ENCODE measurements at regions of chr6 and their contacts with region 1.

Region 1: DNA sequence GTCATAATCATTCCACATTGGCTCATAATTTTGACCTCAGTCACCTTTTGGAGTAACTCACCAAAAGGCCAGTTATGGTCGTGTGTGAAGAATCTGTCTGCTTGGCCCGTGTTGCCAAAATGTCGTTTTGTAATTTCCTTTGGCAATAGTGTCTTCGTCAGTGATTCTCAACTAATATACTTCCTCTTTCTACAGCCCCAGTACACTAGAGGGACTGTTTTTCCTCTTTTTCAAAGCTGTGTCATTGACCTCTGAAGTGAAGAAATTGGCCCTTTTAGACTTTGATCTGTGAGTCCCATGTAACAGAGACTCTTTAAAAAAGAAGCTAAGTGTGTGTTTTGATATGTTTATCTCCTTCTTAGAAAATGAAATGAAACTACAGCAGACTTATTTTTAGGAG is 5.2 kb downstream of the FOXO3 start:
- DNase-seq: peak; percentile 58 to 67
- ATAC-seq: peak; percentile 21
- H3K4me3 ChIP-seq: peak overlapping the region; percentile 1 to 99 (median 91)
- H3K27ac ChIP-seq: peak overlapping the region; percentile 95 to 100 (median 100)
- H3K4me1 ChIP-seq: peaks cover 68 to 69% of the 10 kb centered on the region in 2 donors
- H3K27me3 ChIP-seq: no peaks in the 10 kb centered on the region
- CTCF ChIP-seq: no peak
- POLR2A ChIP-seq: no peak

Region 2: GRCh38 chr6:108157234-108157980 is 408.5 kb before region 1 on chr6:
- in situ Hi-C with region 1: no loop called
- intact Hi-C with region 1: no loop called
- DNase-seq: no peak
- ATAC-seq: no peak
- H3K4me3 ChIP-seq: peak overlapping the region; percentile 22 to 37 (median 26)
- H3K27ac ChIP-seq: no peak overlapping the region
- H3K4me1 ChIP-seq: peaks cover 8 to 9% of the 10 kb centered on the region in 2 donors
- H3K27me3 ChIP-seq: peaks cover 88 to 97% (median 90%) of the 10 kb centered on the region in 3 donors
- CTCF ChIP-seq: no peak
- POLR2A ChIP-seq: no peak

Region 3: DNA sequence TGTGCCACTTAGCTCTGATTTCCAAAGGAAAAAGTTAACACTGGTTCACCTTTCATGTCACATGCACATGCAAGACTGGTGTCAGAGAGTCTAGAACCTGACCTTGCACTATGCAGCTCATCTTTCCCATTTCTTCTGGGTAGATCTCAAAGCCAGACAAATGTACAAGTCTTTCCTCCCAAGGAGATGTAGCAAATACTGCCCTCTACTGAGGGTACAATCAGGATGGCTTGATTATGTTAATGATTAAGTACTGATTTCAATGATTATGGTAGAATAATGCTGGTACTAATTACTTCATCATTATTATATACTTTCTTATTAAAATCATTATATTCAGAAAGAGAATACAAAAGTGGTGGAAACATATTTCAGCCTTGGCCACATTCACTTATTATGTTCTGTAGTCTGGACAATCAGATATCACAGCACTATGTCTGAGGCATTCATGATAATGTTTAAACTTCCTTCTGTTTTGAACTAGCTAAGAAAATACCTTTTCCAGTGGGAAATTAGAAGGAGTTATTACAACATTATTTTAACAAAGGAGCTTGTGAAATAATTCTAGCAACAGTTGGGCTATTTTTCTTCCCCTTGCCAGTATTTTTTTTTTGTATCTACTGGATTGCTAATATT is 73.6 kb before region 1 on chr6:
- in situ Hi-C with region 1: no loop called
- intact Hi-C with region 1: no loop called
- DNase-seq: no peak
- ATAC-seq: peak; percentile 47 to 80
- H3K4me3 ChIP-seq: no peak overlapping the region
- H3K27ac ChIP-seq: no peak overlapping the region
- H3K4me1 ChIP-seq: peaks cover 0 to 7% of the 10 kb centered on the region in 2 donors
- H3K27me3 ChIP-seq: no peaks in the 10 kb centered on the region
- CTCF ChIP-seq: peak; percentile 24 to 61 (median 31)
- POLR2A ChIP-seq: no peak

Region 4: GRCh38 chr6:108581237-108581931 is 15.5 kb after region 1 on chr6:
- in situ Hi-C with region 1: no loop called
- intact Hi-C with region 1: loop called (anchors 2 kb)
- DNase-seq: peak; percentile 68 to 86
- ATAC-seq: peak; percentile 62 to 85
- H3K4me3 ChIP-seq: peak overlapping the region; percentile 10 to 32 (median 28)
- H3K27ac ChIP-seq: peak overlapping the region; percentile 77 to 84 (median 82)
- H3K4me1 ChIP-seq: peaks cover 97% of the 10 kb centered on the region in 2 donors
- H3K27me3 ChIP-seq: no peaks in the 10 kb centered on the region
- CTCF ChIP-seq: no peak
- POLR2A ChIP-seq: peak in 1 of 2 donors; percentile 33